ENCODE measurements at regions of chr20 and their contacts with region 1.

Region 1: DNA sequence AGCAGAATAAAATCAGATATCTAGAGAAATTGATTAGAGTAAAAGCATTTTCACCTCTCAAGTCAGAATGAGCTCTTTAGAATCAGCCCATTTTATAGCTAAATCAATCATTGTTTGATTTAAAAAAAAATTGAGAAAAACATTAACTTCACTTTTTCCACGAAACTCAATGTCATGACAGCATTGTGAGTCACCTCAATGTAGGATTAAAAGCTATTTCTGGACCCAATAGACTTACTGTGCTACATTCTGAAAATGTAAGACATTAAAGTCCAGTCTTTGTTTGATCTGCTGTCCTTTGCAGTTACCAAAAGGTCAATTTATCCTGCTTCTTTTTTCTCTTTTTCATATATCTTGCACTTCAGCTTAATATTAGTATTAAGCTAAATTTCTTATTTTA is 519.4 kb upstream of the ZNF337 start:
- DNase-seq: no peak
- H3K4me3 ChIP-seq: no peak overlapping the region
- H3K4me1 ChIP-seq: peaks cover 2% of the 10 kb centered on the region; the same call in 1 of the 2 replicates
- H3K27me3 ChIP-seq: no peaks in the 10 kb centered on the region

Region 2: GRCh38 chr20:26276554-26277210 is 60.7 kb after region 1 on chr20:
- in situ Hi-C with region 1: loop called (anchors 10 kb)
- DNase-seq: no peak
- H3K4me3 ChIP-seq: no peak overlapping the region
- H3K4me1 ChIP-seq: no peaks in the 10 kb centered on the region
- H3K27me3 ChIP-seq: no peaks in the 10 kb centered on the region